Ovary (tissue), 10 donors: ENCODE measurements at regions of chr6 and their contacts with region 1.

Region 1: DNA sequence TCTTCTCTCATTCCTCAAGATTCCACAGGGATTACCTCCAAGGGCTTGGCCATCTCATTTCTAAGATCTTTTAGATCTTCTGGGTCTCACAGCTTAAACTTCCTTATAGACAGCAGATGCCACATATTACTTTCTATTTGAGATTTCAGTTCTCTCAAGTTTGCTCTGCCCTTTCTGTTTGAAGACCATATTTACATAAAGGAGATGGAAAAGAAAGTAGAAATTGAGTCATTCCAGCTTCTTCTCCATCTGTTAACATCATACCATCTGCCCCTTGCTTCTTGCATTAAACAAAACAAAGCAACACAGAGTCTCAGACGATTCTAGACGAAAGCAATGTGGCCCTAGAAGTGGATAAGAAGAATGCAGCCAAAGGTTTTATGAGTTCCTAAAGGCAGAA is 203.4 kb downstream of the TTLL2 start:
- DNase-seq: no peak
- H3K4me3 ChIP-seq: no peak overlapping the region
- H3K27ac ChIP-seq: no peak overlapping the region
- H3K4me1 ChIP-seq: no peaks in the 10 kb centered on the region
- H3K27me3 ChIP-seq: no peaks in the 10 kb centered on the region
- CTCF ChIP-seq: no peak
- EP300 ChIP-seq: no peak
- POLR2A ChIP-seq: no peak

Region 2: DNA sequence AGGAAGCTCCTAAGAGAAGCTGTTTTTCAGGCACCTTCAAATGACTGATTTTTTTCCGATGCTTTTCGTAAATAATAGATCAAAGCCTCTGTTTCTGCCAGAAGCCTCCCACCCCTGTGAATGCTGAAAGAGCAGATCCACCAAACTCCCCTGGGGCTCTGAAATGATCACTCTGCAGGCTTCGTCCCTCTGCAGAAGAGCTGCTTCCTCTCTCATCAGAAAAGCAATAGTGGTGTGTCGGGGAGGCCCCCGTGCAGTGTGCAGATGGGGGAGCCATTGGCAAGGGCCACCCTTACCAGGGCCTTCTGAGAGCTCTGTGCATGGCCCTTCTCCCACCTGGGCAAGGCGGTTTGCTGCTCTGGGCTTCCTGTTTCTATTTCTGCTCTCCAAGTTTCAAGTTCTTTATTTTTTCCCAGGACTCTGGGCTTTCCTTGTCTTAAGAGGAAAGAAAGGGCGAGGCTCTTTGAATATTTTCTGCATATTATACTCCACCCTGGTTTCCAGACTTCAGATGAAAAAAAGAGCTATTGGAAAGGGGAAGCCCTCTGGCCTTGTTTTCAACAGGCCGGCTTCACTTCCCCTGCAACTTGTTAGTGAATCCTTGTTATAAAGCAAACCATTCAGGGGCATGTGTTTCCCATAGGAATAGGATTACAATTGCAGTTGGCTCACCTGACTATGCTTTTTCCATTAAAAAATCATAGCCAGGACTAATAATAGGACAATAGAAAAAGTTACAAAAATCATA is 48.2 kb before region 1 on chr6:
- intact Hi-C with region 1: loop called in 1 of 4 experiments (anchors 2 kb)
- DNase-seq: no peak
- H3K4me3 ChIP-seq: no peak overlapping the region
- H3K27ac ChIP-seq: no peak overlapping the region
- H3K4me1 ChIP-seq: peaks cover 4% of the 10 kb centered on the region
- H3K27me3 ChIP-seq: no peaks in the 10 kb centered on the region
- CTCF ChIP-seq: no peak
- EP300 ChIP-seq: no peak
- POLR2A ChIP-seq: no peak